HepG2 (cell line): ENCODE measurements at regions of chr3 and their contacts with region 1.

Region 1: DNA sequence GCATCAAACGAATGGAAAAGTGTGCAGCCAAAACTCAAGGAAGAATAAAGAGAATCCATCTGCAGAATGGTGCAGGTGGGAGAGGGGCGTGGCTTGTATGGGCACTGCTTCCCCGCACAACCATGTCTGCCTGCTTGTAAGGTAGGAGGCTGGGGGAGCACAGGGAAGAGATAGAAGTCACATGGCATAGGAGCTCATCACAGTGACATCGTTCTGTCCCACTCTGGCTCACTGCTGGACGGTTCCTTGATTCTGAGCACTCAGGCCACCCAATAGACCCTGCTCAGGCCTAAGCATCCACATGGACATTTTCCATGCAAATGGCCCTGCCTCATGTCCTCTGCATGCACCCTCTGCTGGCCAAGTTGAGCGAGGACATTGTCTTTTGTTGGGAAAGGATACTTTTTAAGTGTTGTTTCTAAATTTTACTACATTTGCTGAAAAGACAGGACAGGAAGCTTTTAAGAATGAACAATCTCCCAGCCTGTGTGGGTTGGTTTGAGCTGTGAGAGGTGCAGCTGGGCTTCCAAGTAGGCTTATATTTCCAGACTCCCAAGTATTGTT is 3.1 kb downstream of the MYLK start:
- DNase-seq: peak; percentile 40
- ATAC-seq: peak; percentile 49
- H3K4me3 ChIP-seq: no peak overlapping the region
- H3K27ac ChIP-seq: no peak overlapping the region
- H3K4me1 ChIP-seq: peaks cover 10% of the 10 kb centered on the region
- H3K27me3 ChIP-seq: peaks cover 0 to 25% of the 10 kb centered on the region in 2 experiments; a peak in 2 of 5 replicates
- CTCF ChIP-seq: peak; percentile 66
- EP300 ChIP-seq: no peak
- POLR2A ChIP-seq: no peak
- RAD21 ChIP-seq: 0 out of 2 replicates have a peak, but pooled peaks have one; percentile 28

Region 2: GRCh38 chr3:123745184-123745855 is 135.8 kb before region 1 on chr3:
- CTCF ChIA-PET with region 1: interaction called, 11 read pairs
- POLR2A ChIA-PET with region 1: no interaction called
- in situ Hi-C with region 1: no loop called
- intact Hi-C with region 1: loop called (anchors 1 kb)
- DNase-seq: peak; percentile 44
- ATAC-seq: peak; percentile 84
- H3K4me3 ChIP-seq: no peak overlapping the region
- H3K27ac ChIP-seq: peak overlapping the region; percentile 30
- H3K4me1 ChIP-seq: peaks cover 19% of the 10 kb centered on the region
- H3K27me3 ChIP-seq: no peaks in the 10 kb centered on the region
- CTCF ChIP-seq: peak; percentile 67
- EP300 ChIP-seq: no peak
- POLR2A ChIP-seq: no peak
- RAD21 ChIP-seq: peak; percentile 65

Region 3: GRCh38 chr3:124075753-124076152 is 194.7 kb after region 1 on chr3:
- CTCF ChIA-PET with region 1: no interaction called
- POLR2A ChIA-PET with region 1: no interaction called
- in situ Hi-C with region 1: no loop called
- intact Hi-C with region 1: no loop called
- DNase-seq: no peak
- ATAC-seq: no peak
- H3K4me3 ChIP-seq: no peak overlapping the region
- H3K27ac ChIP-seq: no peak overlapping the region
- H3K4me1 ChIP-seq: no peaks in the 10 kb centered on the region
- H3K27me3 ChIP-seq: peaks cover 0 to 7% of the 10 kb centered on the region in 2 experiments; a peak in 2 of 5 replicates
- CTCF ChIP-seq: no peak
- EP300 ChIP-seq: no peak
- POLR2A ChIP-seq: no peak
- RAD21 ChIP-seq: no peak